Activated CD8-positive, alpha-beta T cell treated with anti-CD3 and anti-CD28 coated beads for 36 hours (primary cell): ENCODE measurements at regions of chr3 and their contacts with region 1.

Region 1: GRCh38 chr3:53219895-53220483 is 35.8 kb downstream of the TKT start:
- DNase-seq: peak; percentile 90
- ATAC-seq: peak; percentile 97
- H3K4me3 Mint-ChIP-seq: no peak overlapping the region
- H3K27ac Mint-ChIP-seq: no peak overlapping the region
- H3K4me1 Mint-ChIP-seq: peaks cover 4% of the 10 kb centered on the region
- H3K27me3 Mint-ChIP-seq: no peaks in the 10 kb centered on the region
- CTCF ChIP-seq: peak; percentile 91

Region 2: GRCh38 chr3:53089511-53089910 is 130.5 kb before region 1 on chr3:
- CTCF ChIA-PET with region 1: no interaction called
- POLR2A ChIA-PET with region 1: no interaction called
- intact Hi-C with region 1: no loop called
- DNase-seq: no peak
- ATAC-seq: no peak
- H3K4me3 Mint-ChIP-seq: no peak overlapping the region
- H3K27ac Mint-ChIP-seq: no peak overlapping the region
- H3K4me1 Mint-ChIP-seq: no peaks in the 10 kb centered on the region
- H3K27me3 Mint-ChIP-seq: no peaks in the 10 kb centered on the region
- CTCF ChIP-seq: no peak

Region 3: GRCh38 chr3:53114011-53114400 is 106.0 kb before region 1 on chr3:
- CTCF ChIA-PET with region 1: interaction called, 12 read pairs
- POLR2A ChIA-PET with region 1: no interaction called
- intact Hi-C with region 1: no loop called
- DNase-seq: peak; percentile 94
- ATAC-seq: peak; percentile 57
- H3K4me3 Mint-ChIP-seq: no peak overlapping the region
- H3K27ac Mint-ChIP-seq: no peak overlapping the region
- H3K4me1 Mint-ChIP-seq: peaks cover 16% of the 10 kb centered on the region
- H3K27me3 Mint-ChIP-seq: no peaks in the 10 kb centered on the region
- CTCF ChIP-seq: peak; percentile 89

Region 4: DNA sequence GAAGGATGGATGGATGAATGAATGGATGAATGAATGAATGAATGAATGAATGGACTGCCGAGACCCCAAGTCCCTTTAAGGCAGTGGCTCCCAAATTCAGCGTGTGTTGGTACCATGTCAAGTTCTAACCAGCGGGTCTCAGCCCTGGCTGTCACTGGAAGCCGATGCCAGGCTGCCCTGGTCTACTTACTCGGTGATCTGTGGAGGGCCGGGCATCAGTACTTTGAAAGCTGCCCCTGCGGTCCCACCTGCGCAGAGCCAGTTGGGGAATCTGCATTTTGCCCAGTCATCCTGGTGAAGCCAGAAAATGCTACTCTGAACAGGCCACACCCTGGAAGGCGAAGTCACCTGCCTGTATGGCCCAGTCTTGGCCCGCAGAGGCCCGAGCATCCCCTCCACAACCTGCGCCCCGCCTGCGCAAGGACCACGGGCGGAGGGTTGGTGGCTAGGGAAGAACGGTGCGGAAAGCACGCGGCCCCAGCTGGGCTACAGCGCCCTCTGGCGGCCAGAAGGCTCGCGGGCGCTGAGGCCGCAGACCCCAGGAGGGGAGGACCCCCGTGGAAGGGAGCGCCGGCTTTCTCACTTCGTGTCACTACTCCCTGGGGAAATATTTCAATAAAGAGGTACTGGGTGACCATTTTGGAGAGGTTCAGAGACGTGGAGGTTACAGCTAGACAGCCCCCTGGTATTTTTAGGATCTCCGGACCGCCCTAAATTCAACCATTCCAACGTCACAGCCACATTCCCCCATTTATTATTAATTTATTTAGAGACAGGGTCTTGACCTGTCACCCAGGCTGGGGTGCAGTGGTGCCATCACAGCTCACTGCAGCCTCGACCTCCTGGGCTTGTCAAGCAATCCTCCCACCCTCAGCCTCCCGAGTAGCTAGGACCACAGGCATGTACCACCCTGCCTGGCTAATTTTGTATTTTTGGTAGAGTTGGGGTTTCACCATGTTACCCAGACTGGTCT is 24.1 kb before region 1 on chr3:
- CTCF ChIA-PET with region 1: interaction called, 20 read pairs
- POLR2A ChIA-PET with region 1: no interaction called
- intact Hi-C with region 1: no loop called
- DNase-seq: peak; percentile 67
- ATAC-seq: peak; percentile 74
- H3K4me3 Mint-ChIP-seq: no peak overlapping the region
- H3K27ac Mint-ChIP-seq: no peak overlapping the region
- H3K4me1 Mint-ChIP-seq: peaks cover 8% of the 10 kb centered on the region
- H3K27me3 Mint-ChIP-seq: peaks cover 1% of the 10 kb centered on the region
- CTCF ChIP-seq: peak; percentile 99

Region 5: GRCh38 chr3:53236112-53236841 is 16.3 kb after region 1 on chr3:
- CTCF ChIA-PET with region 1: interaction called, 19 read pairs
- POLR2A ChIA-PET with region 1: interaction called, 3 read pairs
- intact Hi-C with region 1: no loop called
- DNase-seq: no peak
- ATAC-seq: no peak
- H3K4me3 Mint-ChIP-seq: no peak overlapping the region
- H3K27ac Mint-ChIP-seq: peak overlapping the region; percentile 58
- H3K4me1 Mint-ChIP-seq: peaks cover 5% of the 10 kb centered on the region
- H3K27me3 Mint-ChIP-seq: no peaks in the 10 kb centered on the region
- CTCF ChIP-seq: no peak

Region 6: DNA sequence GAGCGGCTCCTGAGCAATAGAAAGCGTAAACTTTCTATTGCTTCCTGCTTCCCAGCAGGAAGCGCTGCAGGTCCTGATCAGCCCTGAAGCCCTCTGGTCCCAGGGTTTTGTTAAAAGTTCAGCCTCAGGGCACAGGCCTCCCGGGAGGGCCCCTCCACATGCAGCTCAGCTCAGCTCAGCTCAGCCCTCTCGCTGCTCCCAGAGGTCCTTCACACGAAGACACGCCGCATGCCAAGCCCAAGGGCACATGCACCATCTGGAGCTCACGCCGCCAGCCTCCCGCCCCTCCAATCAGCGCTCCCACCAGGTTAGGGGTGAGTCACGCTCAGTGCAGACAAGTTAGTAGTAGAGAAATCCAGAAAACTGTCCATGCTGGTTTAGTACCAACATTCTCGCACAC is 23.2 kb after region 1 on chr3:
- CTCF ChIA-PET with region 1: interaction called, 10 read pairs
- POLR2A ChIA-PET with region 1: interaction called, 3 read pairs
- intact Hi-C with region 1: no loop called
- DNase-seq: no peak
- ATAC-seq: no peak
- H3K4me3 Mint-ChIP-seq: no peak overlapping the region
- H3K27ac Mint-ChIP-seq: no peak overlapping the region
- H3K4me1 Mint-ChIP-seq: peaks cover 17% of the 10 kb centered on the region
- H3K27me3 Mint-ChIP-seq: no peaks in the 10 kb centered on the region
- CTCF ChIP-seq: no peak

Region 7: GRCh38 chr3:53650424-53650823 is 430.4 kb after region 1 on chr3:
- CTCF ChIA-PET with region 1: no interaction called
- POLR2A ChIA-PET with region 1: no interaction called
- intact Hi-C with region 1: no loop called
- DNase-seq: peak; percentile 9
- ATAC-seq: no peak
- H3K4me3 Mint-ChIP-seq: no peak overlapping the region
- H3K27ac Mint-ChIP-seq: no peak overlapping the region
- H3K4me1 Mint-ChIP-seq: no peaks in the 10 kb centered on the region
- H3K27me3 Mint-ChIP-seq: peaks cover 31% of the 10 kb centered on the region
- CTCF ChIP-seq: no peak

Region 8: GRCh38 chr3:54053211-54053610 is 833.2 kb after region 1 on chr3:
- CTCF ChIA-PET with region 1: no interaction called
- POLR2A ChIA-PET with region 1: no interaction called
- intact Hi-C with region 1: no loop called
- DNase-seq: no peak
- ATAC-seq: no peak
- H3K4me3 Mint-ChIP-seq: no peak overlapping the region
- H3K27ac Mint-ChIP-seq: no peak overlapping the region
- H3K4me1 Mint-ChIP-seq: no peaks in the 10 kb centered on the region
- H3K27me3 Mint-ChIP-seq: peaks cover 1% of the 10 kb centered on the region
- CTCF ChIP-seq: no peak